BJ (cell line): ENCODE measurements at regions of chr5 and their contacts with region 1.

Region 1: DNA sequence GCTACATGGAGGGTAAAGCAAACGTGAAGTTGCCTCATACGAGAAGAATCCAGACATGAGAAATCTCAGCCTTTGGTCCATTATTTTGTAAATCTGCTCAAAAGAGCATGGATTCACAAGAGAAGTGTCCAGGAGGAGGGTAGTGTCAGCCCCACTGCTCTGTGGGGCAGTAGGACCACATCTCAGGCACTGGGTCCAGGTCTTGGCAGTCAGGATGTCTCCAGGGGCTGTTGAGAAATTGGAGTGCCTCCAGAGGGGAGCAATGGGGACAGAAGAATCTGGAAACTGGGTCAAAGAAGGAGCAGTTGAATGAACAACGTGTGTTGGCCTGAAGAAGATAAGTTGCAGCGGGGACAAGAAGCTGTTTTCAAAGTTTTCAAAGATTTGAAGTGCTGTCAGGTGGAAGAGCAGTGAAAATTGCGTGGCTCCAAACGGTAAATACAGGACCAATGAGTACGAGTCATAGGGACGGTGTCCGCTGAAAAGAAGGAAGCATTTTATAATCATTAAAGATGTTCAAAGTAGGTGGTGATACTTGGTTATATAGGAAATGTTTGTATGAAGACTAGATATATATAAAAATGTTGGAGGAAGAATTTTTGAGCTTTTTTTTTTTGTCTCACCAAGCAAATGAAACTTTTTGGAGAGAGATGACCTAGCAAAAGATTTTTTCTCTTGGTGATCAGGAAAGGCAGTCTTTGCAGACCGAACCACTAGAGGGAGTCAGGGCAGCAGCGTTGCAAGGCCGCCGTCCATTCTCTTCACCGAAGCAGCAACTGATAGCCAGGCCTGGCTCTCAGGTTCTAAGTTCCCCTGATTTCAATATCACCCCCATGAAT is 57.1 kb upstream of the ZBED3 start:
- DNase-seq: no peak
- H3K4me3 ChIP-seq: no peak overlapping the region
- H3K27me3 ChIP-seq: peaks cover 4% of the 10 kb centered on the region
- CTCF ChIP-seq: peak; percentile 93

Region 2: GRCh38 chr5:77129391-77129990 is 14.7 kb before region 1 on chr5:
- CTCF ChIA-PET with region 1: interaction called, 10 read pairs
- POLR2A ChIA-PET with region 1: no interaction called
- DNase-seq: no peak
- H3K4me3 ChIP-seq: no peak overlapping the region
- H3K27me3 ChIP-seq: peaks cover 18% of the 10 kb centered on the region
- CTCF ChIP-seq: peak; percentile 66

Region 3: DNA sequence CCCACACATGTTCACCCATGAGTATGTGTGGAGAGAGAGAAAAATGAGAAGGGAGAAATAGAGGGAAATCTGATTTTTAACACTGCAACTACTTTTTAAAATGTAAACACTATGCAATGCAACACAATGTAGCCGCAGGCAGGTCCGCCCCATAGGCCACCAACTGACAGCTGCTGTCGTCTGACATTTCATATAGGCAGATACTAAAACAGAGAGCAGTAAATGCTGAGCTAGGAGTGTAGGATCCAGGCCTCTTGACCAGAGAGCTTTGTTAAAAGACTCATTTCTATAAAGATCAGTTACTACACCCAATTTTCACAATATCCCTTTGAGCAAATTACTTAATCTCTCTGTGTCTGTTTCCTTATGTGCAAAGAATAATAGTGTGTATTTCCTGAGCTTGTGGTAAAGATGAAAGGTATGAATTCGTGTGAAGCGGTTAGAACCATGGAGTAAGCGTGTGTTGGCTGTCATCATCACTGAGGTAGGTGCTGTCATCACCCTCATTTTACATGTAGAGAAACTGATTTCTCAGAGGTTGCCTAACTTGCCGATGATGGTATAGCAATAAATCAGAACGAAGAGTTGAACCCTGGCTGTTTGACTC is 11.1 kb after region 1 on chr5:
- CTCF ChIA-PET with region 1: interaction called, 15 read pairs
- POLR2A ChIA-PET with region 1: no interaction called
- DNase-seq: no peak
- H3K4me3 ChIP-seq: no peak overlapping the region
- H3K27me3 ChIP-seq: no peaks in the 10 kb centered on the region
- CTCF ChIP-seq: no peak

Region 4: GRCh38 chr5:77367733-77368132 is 223.5 kb after region 1 on chr5:
- CTCF ChIA-PET with region 1: no interaction called
- POLR2A ChIA-PET with region 1: no interaction called
- DNase-seq: no peak
- H3K4me3 ChIP-seq: no peak overlapping the region
- H3K27me3 ChIP-seq: no peaks in the 10 kb centered on the region
- CTCF ChIP-seq: no peak

Region 5: DNA sequence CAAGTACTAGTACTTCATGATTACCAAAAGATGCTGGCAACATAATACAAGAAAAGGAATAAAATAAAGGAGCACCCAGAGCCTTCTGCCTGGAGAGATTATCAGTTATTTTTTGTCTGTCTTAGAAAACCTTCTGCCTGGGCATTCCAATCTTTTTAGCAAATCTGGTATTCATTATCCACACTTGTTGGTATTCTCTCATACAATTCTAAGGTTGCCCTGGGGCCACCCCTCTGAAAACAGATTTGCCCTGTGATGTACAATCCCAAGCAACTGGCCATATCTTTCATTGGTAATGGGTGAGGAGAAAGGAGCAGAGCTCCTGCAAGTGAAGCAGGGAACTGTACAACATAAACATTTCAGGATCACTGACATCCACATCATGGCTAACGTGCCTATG is 300.1 kb after region 1 on chr5:
- CTCF ChIA-PET with region 1: interaction called, 10 read pairs
- POLR2A ChIA-PET with region 1: no interaction called
- DNase-seq: no peak
- H3K4me3 ChIP-seq: no peak overlapping the region
- H3K27me3 ChIP-seq: no peaks in the 10 kb centered on the region
- CTCF ChIP-seq: no peak

Region 6: GRCh38 chr5:77491783-77492652 is 347.8 kb after region 1 on chr5 and contains the start of gene WDR41:
- CTCF ChIA-PET with region 1: interaction called, 41 read pairs
- POLR2A ChIA-PET with region 1: interaction called, 3 read pairs
- DNase-seq: peak; percentile 93
- H3K4me3 ChIP-seq: peak within 1 kb of the TSS; percentile 86
- H3K27me3 ChIP-seq: no peaks in the 10 kb centered on the region; the same call in 1 of the 2 replicates
- CTCF ChIP-seq: peak; percentile 85
- polyA plus RNA-seq, gene WDR41: 112 and 164 TPM in 2 replicates